ENCODE measurements at regions of chr1 and their contacts with region 1.

Region 1: GRCh38 chr1:18956369-18957135 is at the start of gene IFFO2:
- DNase-seq: peak; percentile 98
- ATAC-seq: peak; percentile 98
- total RNA-seq, gene IFFO2: 3.4 to 6.4 TPM

Region 2: DNA sequence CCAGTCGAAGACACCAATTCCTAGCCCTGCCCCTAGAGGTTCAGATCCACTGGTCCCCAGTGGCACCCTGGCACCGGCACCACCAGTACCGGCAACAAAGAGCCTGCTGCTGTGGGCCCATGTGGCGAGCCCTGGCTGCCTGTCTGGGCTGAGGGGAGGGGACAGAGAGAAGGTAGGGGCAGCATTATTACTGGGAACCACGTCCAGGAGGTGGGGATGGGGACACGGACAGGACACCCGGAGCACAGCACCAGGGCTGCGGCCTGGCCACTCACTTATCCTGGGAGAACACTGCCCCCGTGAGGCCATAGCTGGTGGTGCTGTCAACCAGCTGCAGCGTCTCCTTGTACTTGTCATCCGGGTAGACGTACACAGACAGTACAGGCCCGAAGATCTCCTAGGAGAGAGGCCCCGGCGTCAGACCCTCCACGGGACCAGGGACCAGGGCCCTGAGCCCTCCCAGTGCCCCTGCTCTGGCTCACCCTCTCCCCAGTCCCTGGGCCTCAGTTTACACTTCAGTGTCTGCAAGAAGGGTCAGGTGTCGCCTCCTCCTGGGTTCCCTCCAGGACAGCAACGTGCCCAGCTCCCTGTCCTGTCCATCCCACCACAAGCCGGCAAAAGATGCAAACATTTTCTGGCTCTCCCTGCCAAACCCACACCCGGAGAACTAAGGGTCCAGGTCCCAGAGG is 81.3 kb before region 1 on chr1:
- intact Hi-C with region 1: no loop called
- DNase-seq: peak; percentile 82
- ATAC-seq: peak; percentile 74 to 79

Region 3: GRCh38 chr1:18922319-18922726 is 34.2 kb before region 1 on chr1:
- intact Hi-C with region 1: loop called in 1 of 2 experiments (anchors 5 kb)
- DNase-seq: peak; percentile 89
- ATAC-seq: peak; percentile 88 to 89

Region 4: GRCh38 chr1:19044975-19045831 is 88.7 kb after region 1 on chr1:
- intact Hi-C with region 1: no loop called
- DNase-seq: no peak
- ATAC-seq: peak in 1 of 2 donors; percentile 45

Region 5: GRCh38 chr1:19067182-19067911 is 110.8 kb after region 1 on chr1:
- intact Hi-C with region 1: no loop called
- DNase-seq: no peak
- ATAC-seq: no peak

Measured in left cardiac atrium (tissue), 4 donors.